MCF 10A (cell line): ENCODE measurements at regions of chr2 and their contacts with region 1.

Region 1: DNA sequence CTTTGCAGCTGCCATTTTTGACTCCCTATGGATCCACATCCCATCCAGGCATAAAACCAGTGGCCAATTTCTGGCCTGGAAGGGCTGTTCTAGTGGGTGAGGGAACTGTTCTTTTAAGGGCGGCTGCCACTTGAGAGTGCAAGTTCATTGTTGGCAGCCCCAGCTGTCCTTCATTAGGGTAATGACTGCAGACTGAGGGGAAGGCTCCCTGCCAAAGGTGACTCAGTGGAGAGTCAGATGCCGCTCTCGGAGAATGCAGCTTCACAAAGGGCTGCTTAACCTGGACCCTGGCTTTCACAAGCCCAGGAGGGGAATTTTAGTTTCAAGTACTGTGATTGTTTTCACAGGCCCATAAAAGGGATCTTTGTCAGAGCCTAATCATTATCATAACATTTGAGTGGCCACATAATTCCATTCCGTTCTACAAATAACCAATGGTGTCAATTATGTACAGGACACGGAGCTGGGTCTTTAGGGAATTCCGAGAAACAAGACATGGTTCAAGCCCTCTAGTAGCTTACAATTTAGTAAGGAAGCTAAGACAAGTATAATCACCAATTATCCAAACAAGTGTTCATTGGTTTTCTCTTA is 235.7 kb downstream of the CDCA7 start:
- DNase-seq: peak; percentile 98
- H3K4me3 Mint-ChIP-seq: peak overlapping the region; percentile 41
- H3K27ac Mint-ChIP-seq: peak overlapping the region; percentile 70
- H3K4me1 Mint-ChIP-seq: peaks cover 28% of the 10 kb centered on the region
- H3K27me3 Mint-ChIP-seq: no peaks in the 10 kb centered on the region
- CTCF ChIP-seq: no peak

Region 2: DNA sequence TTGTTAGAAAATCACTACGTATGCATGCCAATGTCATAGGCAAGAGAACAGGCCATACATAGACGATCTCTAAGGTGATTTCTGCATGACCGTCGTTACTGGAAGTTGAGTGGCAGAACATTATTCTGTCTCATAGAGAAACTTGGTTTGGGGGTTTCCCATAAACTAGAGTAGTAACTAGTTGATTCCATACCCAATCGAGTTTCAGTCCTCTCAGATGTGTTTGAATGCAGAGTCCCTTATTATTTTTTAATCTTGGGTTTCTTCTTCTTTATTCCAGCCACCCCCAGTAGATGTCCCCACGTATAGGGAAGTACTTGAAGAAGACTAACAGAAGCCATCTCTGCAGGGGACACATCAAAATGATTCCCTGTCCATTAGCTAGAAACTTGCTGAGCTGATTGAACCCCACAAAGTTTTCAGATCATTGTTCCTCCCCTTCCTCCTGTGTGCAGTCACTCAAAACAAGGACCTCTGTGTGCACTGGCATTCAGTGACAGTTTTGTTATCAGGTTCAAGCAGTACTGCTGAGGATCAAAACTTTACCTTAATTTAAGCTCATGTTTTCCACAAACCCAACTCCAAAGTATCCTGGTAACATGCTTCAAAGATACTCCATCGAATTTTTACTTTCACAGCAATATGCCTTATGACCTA is 304.1 kb before region 1 on chr2:
- CTCF ChIA-PET with region 1: no interaction called
- POLR2A ChIA-PET with region 1: no interaction called
- intact Hi-C with region 1: no loop called
- DNase-seq: no peak
- H3K4me3 Mint-ChIP-seq: no peak overlapping the region
- H3K27ac Mint-ChIP-seq: no peak overlapping the region
- H3K4me1 Mint-ChIP-seq: no peaks in the 10 kb centered on the region
- H3K27me3 Mint-ChIP-seq: no peaks in the 10 kb centered on the region
- CTCF ChIP-seq: no peak

Region 3: DNA sequence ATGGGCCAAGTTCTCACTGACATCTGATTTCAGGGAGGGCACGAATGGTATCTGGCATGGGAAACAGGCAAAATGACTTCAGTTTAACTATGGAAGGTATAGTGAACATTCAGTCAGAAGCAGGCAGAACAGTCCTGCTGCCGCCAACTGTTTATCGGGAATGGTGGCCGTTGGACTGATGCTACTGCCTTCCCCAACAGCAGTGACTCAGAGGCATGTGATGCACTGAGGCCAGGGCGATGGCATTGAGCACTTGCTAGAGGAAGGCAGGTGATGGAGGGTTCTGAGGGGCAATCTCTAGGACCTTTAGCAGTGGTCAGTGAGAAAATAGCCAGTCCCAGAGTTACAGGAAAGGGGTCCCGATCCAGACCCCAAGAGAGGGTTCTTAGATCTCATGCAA is 86.0 kb before region 1 on chr2:
- CTCF ChIA-PET with region 1: no interaction called
- POLR2A ChIA-PET with region 1: no interaction called
- intact Hi-C with region 1: no loop called
- DNase-seq: no peak
- H3K4me3 Mint-ChIP-seq: no peak overlapping the region
- H3K27ac Mint-ChIP-seq: no peak overlapping the region
- H3K4me1 Mint-ChIP-seq: no peaks in the 10 kb centered on the region
- H3K27me3 Mint-ChIP-seq: peaks cover 54% of the 10 kb centered on the region
- CTCF ChIP-seq: no peak

Region 4: GRCh38 chr2:173555833-173556232 is 34.5 kb before region 1 on chr2:
- CTCF ChIA-PET with region 1: no interaction called
- POLR2A ChIA-PET with region 1: no interaction called
- intact Hi-C with region 1: no loop called
- DNase-seq: peak; percentile 23
- H3K4me3 Mint-ChIP-seq: no peak overlapping the region
- H3K27ac Mint-ChIP-seq: no peak overlapping the region
- H3K4me1 Mint-ChIP-seq: no peaks in the 10 kb centered on the region
- H3K27me3 Mint-ChIP-seq: peaks cover 60% of the 10 kb centered on the region
- CTCF ChIP-seq: no peak

Region 5: GRCh38 chr2:173652767-173653431 is 62.5 kb after region 1 on chr2:
- CTCF ChIA-PET with region 1: interaction called, 4 read pairs
- POLR2A ChIA-PET with region 1: interaction called, 32 read pairs
- intact Hi-C with region 1: no loop called
- DNase-seq: peak; percentile 98
- H3K4me3 Mint-ChIP-seq: peak overlapping the region; percentile 33
- H3K27ac Mint-ChIP-seq: peak overlapping the region; percentile 80
- H3K4me1 Mint-ChIP-seq: peaks cover 39% of the 10 kb centered on the region
- H3K27me3 Mint-ChIP-seq: no peaks in the 10 kb centered on the region
- CTCF ChIP-seq: no peak

Region 6: GRCh38 chr2:173657996-173658717 is 67.8 kb after region 1 on chr2:
- CTCF ChIA-PET with region 1: interaction called, 4 read pairs
- POLR2A ChIA-PET with region 1: interaction called, 32 read pairs
- intact Hi-C with region 1: no loop called
- DNase-seq: peak; percentile 95
- H3K4me3 Mint-ChIP-seq: no peak overlapping the region
- H3K27ac Mint-ChIP-seq: peak overlapping the region; percentile 66
- H3K4me1 Mint-ChIP-seq: peaks cover 39% of the 10 kb centered on the region
- H3K27me3 Mint-ChIP-seq: no peaks in the 10 kb centered on the region
- CTCF ChIP-seq: no peak

Region 7: DNA sequence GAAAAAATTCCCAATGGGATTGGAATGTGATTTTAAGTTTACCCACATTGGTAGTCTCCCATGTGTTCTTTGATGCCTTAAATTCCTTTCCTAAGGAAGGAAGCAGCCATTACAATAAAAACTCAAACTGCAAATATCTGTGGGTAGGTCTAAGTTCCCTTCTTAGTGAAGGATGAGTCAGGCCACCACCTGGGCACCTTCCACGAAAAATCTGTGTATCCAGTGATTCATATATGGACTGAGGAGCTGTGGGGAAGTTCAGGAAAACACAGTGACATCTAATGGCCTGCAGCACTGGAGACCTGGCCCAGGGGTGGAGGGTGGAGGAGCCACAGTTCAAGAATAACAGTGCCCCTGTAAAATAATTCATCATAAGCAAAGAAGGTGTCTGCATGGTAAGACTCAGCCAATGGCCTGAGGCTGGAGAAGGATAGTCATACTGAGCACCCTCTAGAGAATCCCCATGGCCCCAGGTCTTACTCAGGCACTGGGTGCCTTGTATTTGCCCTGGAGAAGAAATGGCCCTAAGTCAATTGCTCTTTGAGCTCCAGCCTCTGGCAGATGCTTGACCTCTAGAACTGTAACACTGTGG is 126.2 kb after region 1 on chr2:
- CTCF ChIA-PET with region 1: no interaction called
- POLR2A ChIA-PET with region 1: interaction called, 11 read pairs
- intact Hi-C with region 1: no loop called
- DNase-seq: peak; percentile 16
- H3K4me3 Mint-ChIP-seq: no peak overlapping the region
- H3K27ac Mint-ChIP-seq: no peak overlapping the region
- H3K4me1 Mint-ChIP-seq: peaks cover 29% of the 10 kb centered on the region
- H3K27me3 Mint-ChIP-seq: no peaks in the 10 kb centered on the region
- CTCF ChIP-seq: no peak